ENCODE measurements at regions of chr6 and their contacts with region 1.

Region 1: DNA sequence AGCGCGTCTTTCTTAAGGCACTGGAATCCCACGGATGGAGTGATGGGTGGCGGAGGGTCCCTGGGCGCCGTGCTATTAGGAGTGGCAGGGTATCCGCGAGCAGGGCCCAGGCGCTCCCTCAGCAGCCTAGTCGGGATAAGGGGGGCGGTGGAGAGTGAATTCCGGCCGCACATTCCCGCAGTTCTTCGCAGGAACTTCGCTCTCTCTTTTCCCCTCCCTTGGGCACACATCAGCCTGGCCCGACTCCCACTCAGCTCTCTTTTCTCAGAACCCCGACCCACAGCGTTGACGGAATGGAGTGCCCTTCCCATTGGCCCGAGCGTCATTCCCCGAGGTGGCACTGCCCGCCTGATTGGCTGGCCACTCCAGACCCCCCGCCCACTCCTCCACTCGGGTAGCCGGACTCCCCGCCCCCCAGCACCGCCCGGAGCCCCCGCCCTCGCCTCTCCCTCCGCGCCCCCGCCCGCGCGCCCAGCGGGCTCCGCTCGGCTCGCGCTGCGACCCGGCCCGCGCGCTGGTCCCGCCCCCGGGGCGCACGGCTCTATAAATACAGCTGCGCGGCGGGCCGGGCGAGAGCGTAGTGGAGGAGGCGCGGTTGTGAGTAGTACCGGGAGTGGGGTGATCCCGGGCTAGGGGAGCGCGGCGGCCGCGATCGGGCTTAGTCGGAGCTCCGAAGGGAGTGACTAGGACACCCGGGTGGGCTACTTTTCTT is at the start of gene ID4:
- DNase-seq: peak; percentile 98
- H3K4me3 ChIP-seq: peak within 1 kb of the TSS; percentile 61 to 88 (median 81)
- H3K27ac ChIP-seq: peak within 1 kb of the TSS; percentile 91 to 95 (median 92)
- H3K4me1 ChIP-seq: peaks cover 0 to 18% (median 7%) of the 10 kb centered on the region in 4 donors
- H3K27me3 ChIP-seq: peaks cover 0 to 6% (median 0%) of the 10 kb centered on the region in 3 donors
- CTCF ChIP-seq: no peak
- EP300 ChIP-seq: no peak
- POLR2A ChIP-seq: peak; percentile 79 to 89
- total RNA-seq, gene ID4: 5.3 to 9.1 (median 7.1) TPM

Region 2: DNA sequence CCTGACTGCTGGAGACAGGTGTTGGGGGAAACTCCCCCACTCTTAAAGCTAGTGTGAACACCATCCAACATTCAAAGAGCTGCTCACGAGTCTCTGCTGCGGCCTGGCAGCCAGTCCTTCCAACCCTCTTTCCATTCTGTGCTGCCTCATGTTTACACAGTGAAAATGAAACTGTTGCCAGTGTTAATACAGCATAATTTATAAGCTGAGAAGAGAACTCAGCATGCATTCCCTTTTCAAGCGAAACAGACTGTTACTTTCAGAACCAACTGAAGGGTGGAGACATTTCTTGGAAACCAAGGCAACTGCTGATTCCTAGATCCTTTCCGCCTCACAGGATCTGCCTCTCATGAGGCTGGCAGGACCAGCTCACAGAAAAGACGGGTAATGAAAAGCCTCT is 533.6 kb before region 1 on chr6:
- intact Hi-C with region 1: loop called (anchors 10 kb)
- DNase-seq: no peak
- H3K4me3 ChIP-seq: peak overlapping the region in 1 of 4 donors; percentile 8
- H3K27ac ChIP-seq: peak overlapping the region; percentile 73 to 77 (median 75)
- H3K4me1 ChIP-seq: peaks cover 0 to 16% (median 11%) of the 10 kb centered on the region in 4 donors
- H3K27me3 ChIP-seq: no peaks in the 10 kb centered on the region
- CTCF ChIP-seq: no peak
- EP300 ChIP-seq: no peak
- POLR2A ChIP-seq: no peak

Region 3: GRCh38 chr6:19804205-19805123 is 32.5 kb before region 1 on chr6:
- intact Hi-C with region 1: loop called (anchors 1 kb)
- DNase-seq: peak; percentile 98
- H3K4me3 ChIP-seq: peak overlapping the region; percentile 42 to 66 (median 64)
- H3K27ac ChIP-seq: peak overlapping the region; percentile 95 to 96 (median 95)
- H3K4me1 ChIP-seq: peaks cover 0 to 21% (median 17%) of the 10 kb centered on the region in 4 donors
- H3K27me3 ChIP-seq: no peaks in the 10 kb centered on the region
- CTCF ChIP-seq: no peak
- EP300 ChIP-seq: peak; percentile 66 to 98 (median 82)
- POLR2A ChIP-seq: peak in 1 of 2 donors; percentile 10

Measured in sigmoid colon (tissue), 7 donors.